Mucosa of descending colon (tissue), 3 donors: ENCODE measurements at regions of chr13 and their contacts with region 1.

Region 1: DNA sequence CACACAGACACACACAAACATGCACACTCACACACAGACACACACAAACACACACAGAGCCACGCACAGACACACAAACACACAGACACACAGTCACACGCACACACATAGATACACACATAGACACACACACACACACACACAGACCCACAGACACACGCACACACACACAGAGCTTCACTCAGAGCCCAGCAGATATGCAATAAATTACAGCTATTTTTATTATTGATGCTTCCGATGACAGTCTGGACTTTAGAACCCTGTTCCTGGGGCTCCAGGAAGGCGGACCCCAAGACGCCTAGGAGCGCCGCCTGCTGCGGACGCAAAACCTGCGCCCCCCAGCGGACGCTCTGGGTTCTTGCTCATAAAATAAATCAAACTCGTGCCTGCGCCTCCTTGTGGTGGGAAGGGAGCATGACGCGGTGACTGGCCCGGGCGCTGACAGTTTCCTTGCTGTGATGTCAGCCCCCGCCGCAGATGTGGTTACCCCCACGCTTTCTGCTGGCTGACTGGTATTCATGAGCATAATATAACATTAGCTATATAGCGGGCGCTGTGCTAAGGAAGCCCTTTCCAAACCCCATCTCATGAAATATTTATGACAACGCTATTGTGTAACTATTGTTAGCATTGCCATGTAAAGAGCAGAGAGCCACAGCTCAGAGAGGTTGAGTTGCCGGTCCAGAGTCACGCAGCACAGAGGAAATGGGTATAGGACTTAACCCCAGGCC is 64.4 kb upstream of the TM9SF2 start:
- DNase-seq: peak; percentile 90 to 93 (median 91)
- ATAC-seq: peak; percentile 91
- H3K4me3 ChIP-seq: no peak overlapping the region
- H3K4me1 ChIP-seq: no peaks in the 10 kb centered on the region
- CTCF ChIP-seq: peak; percentile 98

Region 2: DNA sequence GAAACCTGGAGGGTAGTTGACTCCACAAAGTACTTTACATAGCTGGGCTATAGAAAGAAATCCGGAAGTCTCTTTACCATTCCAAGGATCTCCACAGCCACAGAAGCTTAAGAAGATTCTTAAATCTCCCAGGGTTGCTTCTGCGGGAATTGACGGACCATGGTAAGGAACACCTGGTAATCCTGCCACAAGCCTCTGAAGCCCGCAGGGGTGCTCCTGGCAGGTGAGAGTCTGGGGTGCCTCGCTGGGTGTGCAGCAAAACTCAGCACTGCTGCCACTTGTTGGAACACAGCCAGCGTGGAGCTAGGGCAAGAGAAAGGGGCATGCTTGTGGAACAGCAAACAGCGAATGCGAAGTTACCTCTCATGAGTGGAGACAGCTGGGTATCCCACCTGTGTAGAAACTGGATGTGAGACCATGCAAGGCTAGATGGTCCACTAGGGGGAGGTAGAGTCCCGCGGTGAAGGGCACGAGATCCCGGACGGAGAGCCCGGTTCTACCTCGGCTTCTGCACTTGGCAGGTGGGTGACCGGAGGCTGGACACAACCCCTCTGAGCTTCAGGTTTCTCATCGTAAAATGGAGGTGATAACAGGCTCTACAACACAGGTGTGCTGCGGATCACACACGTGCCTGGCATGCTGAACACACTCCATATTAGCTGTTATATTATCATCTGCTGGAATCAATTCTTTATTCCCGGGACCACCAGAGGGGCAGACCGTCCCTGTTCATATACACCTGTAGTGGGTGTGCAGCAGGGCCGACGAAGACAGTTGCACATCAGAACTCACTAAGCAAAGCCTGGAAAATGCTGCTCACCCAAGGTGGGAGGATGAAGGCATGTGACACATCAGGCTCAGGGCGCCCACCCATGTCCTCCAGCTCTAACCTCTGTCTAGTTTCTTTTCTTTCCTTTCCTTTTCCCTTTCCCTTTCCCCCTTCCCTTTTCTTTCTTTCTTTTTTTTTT is 260.3 kb before region 1 on chr13:
- intact Hi-C with region 1: loop called (anchors 5 kb)
- DNase-seq: peak; percentile 73 to 91 (median 78)
- ATAC-seq: peak; percentile 98
- H3K4me3 ChIP-seq: no peak overlapping the region
- H3K4me1 ChIP-seq: no peaks in the 10 kb centered on the region
- CTCF ChIP-seq: peak; percentile 81

Region 3: DNA sequence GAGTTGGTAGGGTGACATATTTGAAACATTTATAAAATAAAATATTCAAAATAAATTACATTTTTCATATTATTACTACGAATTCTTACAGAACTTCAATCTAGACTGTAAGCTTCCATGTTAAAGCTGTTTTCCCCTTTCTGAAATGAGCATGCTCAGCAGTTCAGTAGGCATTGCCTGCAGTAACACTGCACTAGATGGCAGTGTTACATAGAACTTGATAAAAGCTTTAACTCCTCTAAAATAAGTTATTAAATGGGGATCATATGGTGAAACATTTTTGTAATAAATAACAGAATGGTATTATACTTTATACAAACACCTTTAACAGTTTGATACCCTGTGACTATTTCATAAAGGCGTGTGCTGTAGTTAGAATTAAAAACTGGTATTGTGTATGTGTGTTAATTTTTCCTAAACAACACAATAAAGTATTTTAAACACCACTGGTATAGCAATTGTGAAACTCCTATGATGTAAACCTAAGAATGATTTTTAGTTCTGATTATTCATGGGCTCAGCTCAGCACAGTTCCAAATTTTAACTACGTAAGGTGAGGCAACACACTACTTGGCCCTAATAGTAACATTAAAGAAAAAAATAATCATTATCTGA is 167.1 kb before region 1 on chr13:
- intact Hi-C with region 1: loop called (anchors 5 to 10 kb)
- DNase-seq: peak in 1 of 3 donors; percentile 27
- ATAC-seq: peak; percentile 77
- H3K4me3 ChIP-seq: no peak overlapping the region
- H3K4me1 ChIP-seq: no peaks in the 10 kb centered on the region
- CTCF ChIP-seq: no peak

Region 4: GRCh38 chr13:99331881-99332293 is 105.0 kb before region 1 on chr13:
- intact Hi-C with region 1: no loop called
- DNase-seq: no peak
- ATAC-seq: peak; percentile 40
- H3K4me3 ChIP-seq: no peak overlapping the region
- H3K4me1 ChIP-seq: no peaks in the 10 kb centered on the region
- CTCF ChIP-seq: no peak